AG04450 (cell line): ENCODE measurements at regions of chr5 and their contacts with region 1.

Region 1: DNA sequence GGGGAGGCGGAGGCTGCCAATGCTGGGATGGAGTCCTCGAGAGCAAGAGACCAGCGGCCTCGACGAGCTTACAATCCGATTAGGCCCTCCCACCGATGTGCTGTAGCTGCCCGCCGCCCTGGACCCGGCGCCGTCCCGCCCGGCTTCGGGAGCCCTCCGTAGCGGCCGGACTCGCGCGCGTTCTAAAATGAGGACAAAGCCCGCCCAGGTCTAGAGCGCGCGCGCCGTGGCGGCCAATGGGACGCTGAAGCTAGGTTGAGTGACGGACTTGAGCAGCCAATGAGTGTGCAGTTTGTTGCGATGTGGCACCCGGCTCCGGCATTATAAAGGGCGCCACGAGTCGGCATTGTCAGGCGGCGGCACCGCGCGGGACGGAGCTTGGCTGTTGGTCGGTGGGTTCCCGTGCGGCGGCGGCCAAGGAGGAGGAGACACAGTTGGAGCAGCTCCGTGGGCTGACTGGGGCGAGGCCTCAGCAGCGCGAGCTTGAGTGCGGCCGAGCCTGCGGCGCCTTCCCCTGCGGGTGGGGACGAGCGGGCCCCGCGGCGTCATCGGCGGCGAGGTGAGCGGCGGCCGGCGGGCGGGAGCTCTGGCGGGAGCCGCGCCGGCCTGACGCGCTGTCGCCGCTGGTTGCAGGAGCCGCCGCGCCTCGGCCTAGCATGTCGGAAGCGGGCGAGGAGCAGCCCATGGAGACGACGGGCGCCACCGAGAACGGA is at the start of gene HNRNPAB:
- DNase-seq: peak; percentile 95
- H3K4me3 ChIP-seq: peak within 1 kb of the TSS; percentile 75
- H3K27ac ChIP-seq: peak within 1 kb of the TSS; percentile 11
- H3K27me3 ChIP-seq: no peaks in the 10 kb centered on the region
- CTCF ChIP-seq: no peak
- polyA plus RNA-seq, gene HNRNPAB: 90.9 and 102 TPM in 2 replicates

Region 2: GRCh38 chr5:178153573-178154343 is 50.6 kb before region 1 on chr5 and contains the start of gene NHP2:
- CTCF ChIA-PET with region 1: no interaction called
- POLR2A ChIA-PET with region 1: interaction called, 20 read pairs
- DNase-seq: peak; percentile 98
- H3K4me3 ChIP-seq: peak within 1 kb of the TSS; percentile 61
- H3K27ac ChIP-seq: peak within 1 kb of the TSS; percentile 52
- H3K27me3 ChIP-seq: no peaks in the 10 kb centered on the region
- CTCF ChIP-seq: no peak
- polyA plus RNA-seq, gene NHP2: 93.1 and 108 TPM in 2 replicates

Region 3: GRCh38 chr5:178232124-178232919 is 28.0 kb after region 1 on chr5 and contains the start of gene PHYKPL:
- CTCF ChIA-PET with region 1: interaction called, 3 read pairs
- POLR2A ChIA-PET with region 1: interaction called, 12 read pairs
- DNase-seq: no peak
- H3K4me3 ChIP-seq: peak within 1 kb of the TSS; percentile 86
- H3K27ac ChIP-seq: peak within 1 kb of the TSS; percentile 57
- H3K27me3 ChIP-seq: no peaks in the 10 kb centered on the region
- CTCF ChIP-seq: no peak
- polyA plus RNA-seq, gene PHYKPL: 33.4 and 36.0 TPM in 2 replicates